B cell (primary cell): ENCODE measurements at regions of chr1 and their contacts with region 1.

Region 1: DNA sequence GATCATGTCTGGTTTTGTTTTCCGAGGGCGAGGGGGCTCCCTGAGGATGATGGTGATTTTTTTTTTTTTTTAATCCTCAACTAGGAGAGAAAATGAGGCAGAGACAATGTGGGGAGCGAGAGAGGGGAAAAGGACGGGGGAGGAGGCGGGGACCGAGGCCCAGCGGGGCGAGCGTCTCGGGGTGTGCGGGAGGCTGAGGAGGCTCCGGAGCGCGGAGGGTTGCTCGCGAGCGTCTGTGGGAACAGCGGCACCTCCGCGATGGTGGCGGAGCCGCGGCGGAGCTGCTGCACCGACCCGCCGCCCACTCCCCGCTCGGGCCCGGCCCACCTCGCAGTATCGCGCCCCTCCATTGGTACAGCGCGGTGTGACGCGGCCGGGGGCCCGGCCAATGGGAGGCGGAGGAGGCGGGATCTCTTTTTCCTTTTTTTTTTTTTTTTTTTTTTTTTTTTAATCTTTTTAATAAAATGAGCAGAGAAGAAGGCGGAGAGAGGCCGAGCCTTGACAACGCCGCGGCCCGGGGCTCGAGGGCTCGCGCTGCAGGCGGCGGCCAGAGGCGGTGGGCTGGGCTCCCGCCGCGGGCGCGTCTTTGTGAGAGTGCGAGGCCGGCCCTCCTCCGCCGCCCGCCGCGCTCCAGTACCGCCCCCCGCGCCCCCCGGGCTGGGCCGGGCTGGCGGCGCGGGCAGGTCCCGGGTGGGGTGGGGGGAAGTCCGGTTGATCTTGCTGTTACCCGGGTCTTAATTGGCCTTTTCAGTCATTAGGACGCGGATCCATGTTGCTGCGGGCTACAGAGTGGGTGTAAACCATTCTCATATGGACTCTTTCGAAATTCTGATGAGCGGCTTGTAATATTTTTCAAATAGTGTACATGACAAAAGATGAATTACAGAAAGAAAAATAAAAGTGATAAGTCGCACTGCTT is at the start of gene RERE:
- DNase-seq: peak; percentile 97
- ATAC-seq: peak; percentile 94
- H3K4me3 ChIP-seq: peak within 1 kb of the TSS; percentile 74 to 99 (median 95)
- H3K4me3 Mint-ChIP-seq: peak within 1 kb of the TSS; percentile 89
- H3K27ac ChIP-seq: peak within 1 kb of the TSS; percentile 85 to 95
- H3K27ac Mint-ChIP-seq: peak within 1 kb of the TSS; percentile 90
- H3K4me1 ChIP-seq: peaks cover 23 to 25% of the 10 kb centered on the region in 2 donors
- H3K4me1 Mint-ChIP-seq: peaks cover 40% of the 10 kb centered on the region
- H3K27me3 ChIP-seq: no peaks in the 10 kb centered on the region
- H3K27me3 Mint-ChIP-seq: peaks cover 5% of the 10 kb centered on the region
- CTCF ChIP-seq: no peak
- total RNA-seq, gene RERE: 132 and 146 TPM in 2 replicates

Region 2: DNA sequence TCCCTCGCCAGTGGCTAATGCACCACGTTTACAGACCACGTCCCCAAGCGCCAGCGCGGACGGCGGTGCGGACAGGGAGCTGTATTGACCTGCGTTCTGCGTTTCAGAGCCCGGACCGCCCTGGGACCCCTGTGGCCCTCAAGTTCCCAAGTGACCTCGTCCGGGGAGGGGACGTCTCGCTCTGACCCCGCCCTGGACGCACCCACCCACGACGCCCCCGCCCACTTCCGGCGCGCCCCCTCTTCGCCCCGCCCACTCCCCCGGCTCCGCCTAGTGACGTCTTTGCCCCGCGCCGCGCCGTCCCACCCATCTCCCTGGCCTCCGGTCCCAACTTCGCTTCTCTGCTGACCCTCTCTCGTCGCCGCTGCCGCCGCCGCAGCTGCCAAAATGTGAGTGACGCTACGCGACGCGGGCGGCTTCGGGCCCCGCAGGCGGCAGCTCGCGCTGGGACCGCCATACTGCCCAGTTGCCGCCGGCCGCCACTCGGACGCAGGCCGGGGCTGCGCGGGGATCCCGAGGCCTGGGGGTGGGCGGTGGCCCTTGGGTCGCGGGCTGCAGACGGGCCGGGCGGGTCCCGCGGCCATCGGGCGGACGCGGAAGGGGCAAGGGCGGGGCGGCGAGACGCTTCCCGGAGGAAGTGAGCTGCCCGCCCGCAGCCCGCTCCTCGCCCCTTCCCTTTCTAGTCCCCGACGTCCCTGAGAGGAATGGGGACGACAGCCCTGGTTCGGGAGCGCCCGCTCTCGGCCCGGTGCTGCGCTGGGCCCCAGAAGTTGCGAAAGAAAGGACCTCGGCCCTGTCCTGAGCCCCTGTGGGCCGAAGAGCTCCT is 1046.5 kb before region 1 on chr1 and contains the start of gene VAMP3:
- CTCF ChIA-PET with region 1: no interaction called
- POLR2A ChIA-PET with region 1: no interaction called
- intact Hi-C with region 1: loop called (anchors 10 kb)
- DNase-seq: peak; percentile 86
- ATAC-seq: peak; percentile 96
- H3K4me3 ChIP-seq: peak within 1 kb of the TSS; percentile 70 to 86 (median 77)
- H3K4me3 Mint-ChIP-seq: peak within 1 kb of the TSS; percentile 89
- H3K27ac ChIP-seq: peak within 1 kb of the TSS; percentile 59 to 86
- H3K27ac Mint-ChIP-seq: peak within 1 kb of the TSS; percentile 88
- H3K4me1 ChIP-seq: peaks cover 12 to 15% of the 10 kb centered on the region in 2 donors
- H3K4me1 Mint-ChIP-seq: peaks cover 28% of the 10 kb centered on the region
- H3K27me3 ChIP-seq: no peaks in the 10 kb centered on the region
- H3K27me3 Mint-ChIP-seq: no peaks in the 10 kb centered on the region
- CTCF ChIP-seq: no peak
- total RNA-seq, gene VAMP3: 48.6 and 49.6 TPM in 2 replicates

Region 3: DNA sequence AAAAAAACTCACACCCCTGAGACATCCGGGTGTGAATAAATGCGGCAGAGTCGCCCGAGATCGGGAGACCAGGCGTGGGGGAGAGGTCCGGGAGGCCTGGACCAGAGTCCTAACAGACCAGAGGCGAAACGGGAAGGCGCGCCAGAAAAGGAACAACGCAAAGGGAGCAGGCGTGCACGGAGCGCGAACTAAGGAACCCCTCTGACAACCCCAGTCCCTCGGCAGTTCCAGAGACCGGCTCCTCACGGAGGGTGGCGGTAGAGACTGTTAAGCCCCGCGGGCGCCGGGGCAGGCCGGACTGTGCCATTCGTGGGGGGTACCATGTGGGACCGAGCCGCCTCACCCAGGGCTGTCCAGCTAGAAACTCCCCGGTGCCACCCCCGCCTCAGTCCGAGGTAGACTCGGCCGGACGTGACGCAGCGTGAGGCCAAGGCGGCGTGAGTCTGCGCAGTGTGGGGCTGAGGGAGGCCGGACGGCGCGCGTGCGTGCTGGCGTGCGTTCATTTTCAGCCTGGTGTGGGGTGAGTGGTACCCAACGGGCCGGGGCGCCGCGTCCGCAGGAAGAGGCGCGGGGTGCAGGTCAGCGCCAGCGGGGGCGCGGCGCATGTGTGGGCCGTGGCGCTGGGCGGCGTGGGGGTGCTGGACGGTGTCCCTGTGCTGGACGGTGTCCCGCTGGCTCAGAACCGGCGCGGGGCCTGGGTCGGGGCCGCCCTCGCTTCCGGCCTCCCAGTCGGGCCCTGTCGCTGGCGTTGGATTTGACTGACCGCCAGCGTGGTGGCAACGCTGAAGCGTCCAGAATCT is 856.2 kb before region 1 on chr1 and contains the start of gene PARK7:
- CTCF ChIA-PET with region 1: no interaction called
- POLR2A ChIA-PET with region 1: interaction called, 4 read pairs
- intact Hi-C with region 1: loop called (anchors 5 kb)
- DNase-seq: peak; percentile 100
- ATAC-seq: peak; percentile 97
- H3K4me3 ChIP-seq: peak within 1 kb of the TSS; percentile 48 to 90 (median 81)
- H3K4me3 Mint-ChIP-seq: peak within 1 kb of the TSS; percentile 97
- H3K27ac ChIP-seq: peak within 1 kb of the TSS; percentile 88 to 99
- H3K27ac Mint-ChIP-seq: peak within 1 kb of the TSS; percentile 98
- H3K4me1 ChIP-seq: peaks cover 19 to 23% of the 10 kb centered on the region in 2 donors
- H3K4me1 Mint-ChIP-seq: peaks cover 43% of the 10 kb centered on the region
- H3K27me3 ChIP-seq: no peaks in the 10 kb centered on the region
- H3K27me3 Mint-ChIP-seq: no peaks in the 10 kb centered on the region
- CTCF ChIP-seq: peak; percentile 58
- total RNA-seq, gene PARK7: 116 and 118 TPM in 2 replicates

Region 4: DNA sequence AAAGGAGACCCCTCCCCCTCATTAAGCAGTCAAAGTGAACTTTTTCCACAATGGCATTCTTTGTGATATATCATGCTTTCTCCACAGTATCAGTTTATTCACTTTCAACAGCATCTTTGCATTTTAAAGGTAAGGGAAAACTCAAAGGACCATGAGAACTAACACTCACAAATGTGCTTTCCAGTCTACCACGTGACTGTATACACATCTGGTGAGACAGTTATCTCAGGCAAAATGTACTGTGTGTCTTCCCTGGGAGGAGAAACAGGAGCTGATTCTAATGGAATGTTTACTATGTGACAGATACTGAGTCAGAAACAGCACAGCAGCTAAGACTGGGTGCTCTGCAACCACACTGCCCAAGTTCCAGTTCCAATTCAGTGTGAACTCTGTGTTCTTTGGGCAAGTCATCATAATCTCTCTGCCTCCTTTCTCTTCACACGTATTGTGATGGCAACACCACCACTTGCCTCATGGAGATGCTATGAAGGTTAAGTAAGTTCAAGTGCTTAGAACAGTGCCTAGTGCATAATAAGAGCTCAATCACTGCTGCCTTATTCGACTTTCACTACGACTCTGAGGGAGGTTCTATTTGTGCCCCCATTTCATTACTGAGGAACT is 420.8 kb before region 1 on chr1:
- CTCF ChIA-PET with region 1: no interaction called
- POLR2A ChIA-PET with region 1: no interaction called
- intact Hi-C with region 1: loop called (anchors 10 kb)
- DNase-seq: no peak
- ATAC-seq: no peak
- H3K4me3 ChIP-seq: no peak overlapping the region
- H3K4me3 Mint-ChIP-seq: peak overlapping the region; percentile 14
- H3K27ac ChIP-seq: peak overlapping the region; percentile 56 to 79
- H3K27ac Mint-ChIP-seq: peak overlapping the region; percentile 66
- H3K4me1 ChIP-seq: peaks cover 47 to 52% of the 10 kb centered on the region in 2 donors
- H3K4me1 Mint-ChIP-seq: peaks cover 67% of the 10 kb centered on the region
- H3K27me3 ChIP-seq: no peaks in the 10 kb centered on the region
- H3K27me3 Mint-ChIP-seq: no peaks in the 10 kb centered on the region
- CTCF ChIP-seq: no peak

Region 5: DNA sequence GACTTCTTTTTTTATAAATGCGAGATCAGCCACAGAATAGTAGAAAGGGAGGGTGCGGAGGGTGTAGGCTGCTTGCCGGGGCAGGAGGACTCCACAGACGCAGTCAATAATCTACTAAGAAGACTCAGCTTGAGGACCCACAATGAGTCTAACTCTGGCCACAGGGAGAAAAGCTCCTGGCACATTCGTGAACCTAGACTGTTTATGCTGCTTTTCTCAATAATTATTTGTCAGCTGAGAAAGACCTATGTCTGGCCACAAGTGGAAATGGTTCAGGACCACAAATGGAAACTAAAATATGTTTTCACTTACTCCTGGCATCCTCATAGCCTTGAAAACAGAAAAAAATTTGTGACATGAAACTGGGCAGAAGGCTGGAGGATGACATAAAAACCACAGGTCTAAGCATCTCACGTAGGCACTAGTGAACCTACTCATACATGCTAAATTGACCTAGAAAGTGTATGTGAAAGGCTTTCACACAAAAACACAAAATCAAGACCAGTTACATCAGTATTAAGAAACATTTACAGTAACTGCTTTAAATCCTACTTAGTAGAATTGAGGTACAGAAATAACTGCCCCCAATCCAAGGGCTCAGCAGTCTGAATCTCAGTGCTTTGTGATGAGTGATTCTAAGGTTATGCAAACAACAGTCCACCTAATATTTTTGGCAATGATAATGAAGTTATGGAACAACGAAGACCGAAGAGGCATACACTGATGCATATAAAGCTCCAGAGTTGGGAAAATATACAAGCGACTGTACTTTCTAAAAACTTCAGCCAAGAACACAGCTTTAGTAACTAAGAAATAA is 340.3 kb before region 1 on chr1:
- CTCF ChIA-PET with region 1: no interaction called
- POLR2A ChIA-PET with region 1: no interaction called
- intact Hi-C with region 1: no loop called
- DNase-seq: no peak
- ATAC-seq: no peak
- H3K4me3 ChIP-seq: no peak overlapping the region
- H3K4me3 Mint-ChIP-seq: no peak overlapping the region
- H3K27ac ChIP-seq: peak overlapping the region in 1 of 2 donors; percentile 10
- H3K27ac Mint-ChIP-seq: no peak overlapping the region
- H3K4me1 ChIP-seq: peaks cover 17 to 20% of the 10 kb centered on the region in 2 donors
- H3K4me1 Mint-ChIP-seq: peaks cover 45% of the 10 kb centered on the region
- H3K27me3 ChIP-seq: no peaks in the 10 kb centered on the region
- H3K27me3 Mint-ChIP-seq: no peaks in the 10 kb centered on the region
- CTCF ChIP-seq: no peak

Region 6: DNA sequence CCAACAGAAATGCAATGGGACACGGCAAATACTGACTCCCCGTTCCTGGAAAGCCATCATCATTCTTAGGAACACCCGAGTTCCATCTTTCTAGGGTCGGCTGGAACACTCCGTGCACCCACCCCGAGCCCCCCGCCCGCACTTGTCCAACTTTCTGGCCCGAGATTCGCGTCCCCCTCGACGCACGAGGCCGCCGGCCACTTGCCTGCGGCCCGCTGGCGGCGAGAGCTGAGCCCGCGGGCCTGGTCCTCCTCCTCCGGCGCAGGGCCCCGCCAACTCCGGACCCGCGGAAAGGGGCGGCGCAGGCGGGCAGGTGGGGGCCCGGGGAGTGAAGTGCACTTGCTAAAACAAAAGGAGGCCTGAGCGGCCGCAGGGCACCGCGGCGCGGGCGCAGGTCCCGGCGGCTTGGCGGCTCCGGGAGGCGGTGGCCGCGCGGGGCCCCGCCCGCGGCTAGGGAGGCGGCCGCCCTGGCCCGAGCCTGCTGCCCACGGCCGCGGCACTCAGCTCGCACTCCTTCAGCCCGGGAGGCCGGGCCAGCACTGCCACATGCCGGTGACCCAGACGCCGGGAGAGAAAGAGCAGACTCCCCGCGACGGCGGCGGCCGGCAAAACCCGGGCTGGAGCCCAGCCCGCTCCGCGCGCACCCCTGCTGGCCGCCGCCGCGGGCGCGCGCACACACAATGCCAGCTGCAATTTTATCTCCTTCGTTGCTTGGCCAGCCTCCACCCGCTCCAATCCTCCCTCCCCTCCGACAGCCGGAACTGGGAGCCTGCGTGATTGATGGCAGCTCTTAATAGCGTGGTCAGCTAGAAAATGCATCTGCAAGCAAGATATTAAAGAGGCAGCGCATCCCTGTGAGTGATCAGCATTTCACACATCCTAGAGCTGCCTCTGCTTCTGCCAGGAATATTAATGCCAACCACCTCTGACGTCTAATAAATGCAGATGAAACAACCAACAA is 114.5 kb before region 1 on chr1:
- CTCF ChIA-PET with region 1: no interaction called
- POLR2A ChIA-PET with region 1: interaction called, 4 read pairs
- intact Hi-C with region 1: loop called (anchors 2 kb)
- DNase-seq: peak; percentile 88
- ATAC-seq: peak; percentile 72
- H3K4me3 ChIP-seq: peak overlapping the region; percentile 60 to 81 (median 63)
- H3K4me3 Mint-ChIP-seq: peak overlapping the region; percentile 93
- H3K27ac ChIP-seq: peak overlapping the region; percentile 54 to 77
- H3K27ac Mint-ChIP-seq: peak overlapping the region; percentile 93
- H3K4me1 ChIP-seq: peaks cover 32 to 39% of the 10 kb centered on the region in 2 donors
- H3K4me1 Mint-ChIP-seq: peaks cover 61% of the 10 kb centered on the region
- H3K27me3 ChIP-seq: no peaks in the 10 kb centered on the region
- H3K27me3 Mint-ChIP-seq: no peaks in the 10 kb centered on the region
- CTCF ChIP-seq: no peak

Region 7: DNA sequence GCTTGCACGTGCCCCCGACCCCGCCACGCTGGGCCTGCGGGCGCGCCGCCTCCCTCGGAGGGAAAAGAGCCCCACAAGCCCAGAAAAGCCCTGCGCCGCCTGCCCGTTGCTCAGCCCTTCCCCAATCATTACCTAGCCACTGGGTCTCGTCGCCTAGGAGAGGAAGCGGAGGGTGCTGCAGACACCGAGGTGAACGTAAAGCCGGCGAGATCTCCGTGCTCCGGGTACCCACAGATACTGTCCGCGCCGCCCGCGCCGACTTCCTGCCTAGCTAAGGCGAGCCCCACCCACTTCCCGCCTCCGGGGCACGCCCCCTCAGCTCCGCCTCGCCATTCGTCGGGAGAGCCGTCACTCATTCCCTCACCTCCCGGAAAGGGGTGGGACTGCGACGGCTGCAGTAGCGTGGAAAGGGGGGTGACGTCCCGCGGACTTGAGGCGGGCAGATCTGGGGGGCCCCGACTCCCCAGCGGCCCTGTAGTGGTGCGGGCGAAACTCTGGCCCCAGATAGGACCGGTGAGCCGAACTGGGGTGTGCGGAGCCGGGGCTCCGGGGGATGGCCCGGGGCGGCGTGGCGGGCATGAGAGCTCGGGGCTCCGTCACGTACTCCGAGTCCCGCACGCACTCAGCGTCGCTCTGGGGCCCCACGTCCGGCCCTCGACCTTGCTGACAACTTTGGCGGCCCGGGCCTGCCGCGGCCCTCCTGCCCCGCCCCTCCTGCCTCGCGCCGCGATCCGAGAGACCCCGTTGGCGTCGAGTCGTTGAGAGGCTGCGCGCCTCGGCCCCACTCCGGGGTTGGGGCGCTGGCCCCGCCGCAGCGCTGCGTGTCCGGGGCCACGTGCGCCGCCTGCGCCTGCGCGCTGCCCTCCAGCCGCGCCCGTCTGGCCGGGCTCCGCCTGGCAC is 61.0 kb after region 1 on chr1 and contains the start of gene ENO1:
- CTCF ChIA-PET with region 1: no interaction called
- POLR2A ChIA-PET with region 1: no interaction called
- intact Hi-C with region 1: loop called (anchors 1 kb)
- DNase-seq: peak; percentile 100
- ATAC-seq: peak; percentile 87
- H3K4me3 ChIP-seq: peak within 1 kb of the TSS; percentile 78 to 94 (median 88)
- H3K4me3 Mint-ChIP-seq: peak within 1 kb of the TSS; percentile 95
- H3K27ac ChIP-seq: peak within 1 kb of the TSS; percentile 94 to 95
- H3K27ac Mint-ChIP-seq: peak within 1 kb of the TSS; percentile 97
- H3K4me1 ChIP-seq: peaks cover 31 to 36% of the 10 kb centered on the region in 2 donors
- H3K4me1 Mint-ChIP-seq: peaks cover 46% of the 10 kb centered on the region
- H3K27me3 ChIP-seq: no peaks in the 10 kb centered on the region
- H3K27me3 Mint-ChIP-seq: no peaks in the 10 kb centered on the region
- CTCF ChIP-seq: no peak
- total RNA-seq, gene ENO1: 223 and 237 TPM in 2 replicates

Region 8: GRCh38 chr1:8970870-8971337 is 153.2 kb after region 1 on chr1:
- CTCF ChIA-PET with region 1: no interaction called
- POLR2A ChIA-PET with region 1: no interaction called
- intact Hi-C with region 1: no loop called
- DNase-seq: peak; percentile 42
- ATAC-seq: peak; percentile 28
- H3K4me3 ChIP-seq: no peak overlapping the region
- H3K4me3 Mint-ChIP-seq: peak overlapping the region; percentile 75
- H3K27ac ChIP-seq: peak overlapping the region in 1 of 2 donors; percentile 13
- H3K27ac Mint-ChIP-seq: peak overlapping the region; percentile 5
- H3K4me1 ChIP-seq: peaks cover 7 to 11% of the 10 kb centered on the region in 2 donors
- H3K4me1 Mint-ChIP-seq: peaks cover 12% of the 10 kb centered on the region
- H3K27me3 ChIP-seq: no peaks in the 10 kb centered on the region
- H3K27me3 Mint-ChIP-seq: peaks cover 13% of the 10 kb centered on the region
- CTCF ChIP-seq: no peak

Region 9: DNA sequence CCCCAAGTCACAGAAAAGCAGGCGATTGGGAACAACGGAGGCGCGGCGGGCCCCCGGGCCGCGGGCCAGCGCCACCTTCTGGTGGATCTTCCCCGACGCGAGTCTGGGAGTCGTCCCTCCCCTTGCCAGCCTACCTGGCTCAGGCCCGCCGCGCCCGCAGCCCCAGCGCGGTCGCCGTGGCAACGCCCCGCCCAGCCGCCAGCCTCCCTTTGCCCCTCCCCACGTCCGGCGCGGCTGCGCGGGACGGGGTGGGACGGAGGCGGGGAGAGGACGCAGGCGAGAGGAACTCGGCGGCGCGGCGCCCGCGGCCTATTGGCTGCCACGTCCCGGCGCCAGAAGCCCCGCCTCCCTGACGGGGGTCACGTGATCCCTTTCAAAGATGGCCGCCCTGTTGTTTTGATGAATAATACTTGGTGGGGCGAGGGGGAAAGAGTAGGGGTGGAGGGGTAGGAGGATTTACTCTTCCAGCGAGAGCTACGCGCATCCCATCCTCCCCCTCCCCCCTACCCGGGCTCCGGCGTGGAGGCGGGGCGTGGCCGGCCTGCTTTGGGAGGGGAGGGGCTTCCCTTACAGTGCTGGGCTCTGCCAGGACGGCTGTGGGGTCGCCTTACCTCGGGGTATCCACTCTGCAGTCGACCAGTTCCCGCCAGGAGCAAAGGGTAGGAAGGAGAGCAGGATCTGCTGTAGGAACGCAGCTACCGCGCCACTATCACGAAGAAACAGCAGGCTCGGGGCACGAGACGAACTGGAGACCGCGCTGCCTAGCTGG is 1215.1 kb after region 1 on chr1 and contains the start of gene UBE4B:
- CTCF ChIA-PET with region 1: no interaction called
- POLR2A ChIA-PET with region 1: no interaction called
- intact Hi-C with region 1: loop called (anchors 5 kb)
- DNase-seq: peak; percentile 99
- ATAC-seq: peak; percentile 94
- H3K4me3 ChIP-seq: peak within 1 kb of the TSS; percentile 70 to 93 (median 89)
- H3K4me3 Mint-ChIP-seq: peak within 1 kb of the TSS; percentile 99
- H3K27ac ChIP-seq: peak within 1 kb of the TSS; percentile 73 to 84
- H3K27ac Mint-ChIP-seq: peak within 1 kb of the TSS; percentile 96
- H3K4me1 ChIP-seq: peaks cover 18 to 19% of the 10 kb centered on the region in 2 donors
- H3K4me1 Mint-ChIP-seq: peaks cover 23% of the 10 kb centered on the region
- H3K27me3 ChIP-seq: no peaks in the 10 kb centered on the region
- H3K27me3 Mint-ChIP-seq: no peaks in the 10 kb centered on the region
- CTCF ChIP-seq: peak; percentile 89
- total RNA-seq, gene UBE4B: 57.5 and 59.0 TPM in 2 replicates